Adrenal gland (tissue), 19 donors: ENCODE measurements at regions of chr3 and their contacts with region 1.

Region 1: DNA sequence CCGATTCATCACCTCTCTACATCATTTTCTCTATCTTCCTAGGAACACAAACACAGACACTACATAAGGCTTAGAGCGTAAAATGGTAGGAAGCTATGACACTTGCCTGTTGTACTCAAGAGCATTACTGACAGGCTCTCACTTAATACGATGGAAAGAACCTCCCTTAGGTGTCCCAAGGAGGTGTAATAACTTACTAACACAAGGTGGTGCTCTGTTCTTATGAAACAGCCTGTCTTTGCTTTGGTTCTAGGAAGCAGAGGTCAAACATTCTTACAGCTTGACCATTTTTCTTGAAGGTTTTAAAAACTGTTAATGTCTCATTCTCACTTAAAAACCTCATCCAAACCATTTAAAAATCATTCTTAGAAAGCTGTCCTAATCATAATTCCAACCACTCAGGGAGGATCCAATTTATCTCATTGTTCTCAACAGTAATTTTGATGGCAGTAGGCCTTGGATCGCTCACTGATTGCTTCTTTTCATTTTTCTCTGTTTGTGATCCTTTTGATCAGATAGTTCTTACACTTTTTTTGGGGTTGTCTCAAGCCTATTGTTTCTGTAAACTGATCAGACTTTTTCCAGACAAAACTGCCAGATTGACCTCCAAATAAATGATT is 317.8 kb upstream of the AGTR1 start:
- DNase-seq: no peak
- H3K4me3 ChIP-seq: no peak overlapping the region
- H3K27ac ChIP-seq: no peak overlapping the region
- H3K4me1 ChIP-seq: no peaks in the 10 kb centered on the region
- H3K27me3 ChIP-seq: no peaks in the 10 kb centered on the region
- CTCF ChIP-seq: peak; percentile 12 to 66 (median 59)
- POLR2A ChIP-seq: no peak

Region 2: GRCh38 chr3:147915057-147915456 is 464.8 kb before region 1 on chr3:
- intact Hi-C with region 1: no loop called
- DNase-seq: no peak
- H3K4me3 ChIP-seq: no peak overlapping the region
- H3K27ac ChIP-seq: no peak overlapping the region
- H3K4me1 ChIP-seq: no peaks in the 10 kb centered on the region
- H3K27me3 ChIP-seq: no peaks in the 10 kb centered on the region
- CTCF ChIP-seq: no peak
- POLR2A ChIP-seq: no peak

Region 3: DNA sequence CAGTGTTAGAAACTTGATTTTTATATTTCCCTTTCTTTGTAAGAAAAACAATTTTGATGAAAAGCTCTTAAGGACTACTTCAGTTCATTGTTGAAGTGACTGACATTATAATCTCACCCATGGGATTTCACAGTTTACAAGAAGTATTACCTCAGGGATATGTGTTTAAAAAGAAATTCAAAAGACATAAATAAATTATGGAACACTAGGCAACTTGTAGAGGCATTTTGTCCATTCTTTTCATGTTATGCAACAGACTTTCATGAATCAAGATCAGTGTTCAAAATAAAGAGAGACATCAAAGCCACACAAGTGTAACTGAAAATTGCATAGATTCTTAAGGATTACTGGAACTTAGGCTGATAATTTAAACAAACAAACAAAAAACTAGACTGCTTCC is 121.0 kb after region 1 on chr3:
- intact Hi-C with region 1: no loop called
- DNase-seq: no peak
- H3K4me3 ChIP-seq: no peak overlapping the region
- H3K27ac ChIP-seq: no peak overlapping the region
- H3K4me1 ChIP-seq: no peaks in the 10 kb centered on the region
- H3K27me3 ChIP-seq: no peaks in the 10 kb centered on the region
- CTCF ChIP-seq: no peak
- POLR2A ChIP-seq: no peak

Region 4: GRCh38 chr3:148737104-148737530 is 357.2 kb after region 1 on chr3:
- intact Hi-C with region 1: loop called in 1 of 2 experiments (anchors 10 kb)
- DNase-seq: peak; percentile 26 to 90 (median 76)
- H3K4me3 ChIP-seq: no peak overlapping the region
- H3K27ac ChIP-seq: peak overlapping the region in 2 of 5 donors; percentile 53 to 57
- H3K4me1 ChIP-seq: peaks cover 0 to 9% of the 10 kb centered on the region in 2 donors
- H3K27me3 ChIP-seq: no peaks in the 10 kb centered on the region
- CTCF ChIP-seq: no peak
- POLR2A ChIP-seq: no peak